ENCODE measurements at regions of chr20 and their contacts with region 1.

Region 1: GRCh38 chr20:44609511-44610312 is 27.3 kb downstream of the PKIG start:
- DNase-seq: peak; percentile 68 to 90 (median 80)
- ATAC-seq: peak; percentile 81
- H3K4me3 ChIP-seq: no peak overlapping the region
- H3K4me3 Mint-ChIP-seq: peak overlapping the region; percentile 83
- H3K27ac ChIP-seq: peak overlapping the region; percentile 35 to 86
- H3K27ac Mint-ChIP-seq: peak overlapping the region; percentile 98
- H3K4me1 ChIP-seq: peaks cover 28% of the 10 kb centered on the region
- H3K4me1 Mint-ChIP-seq: peaks cover 40% of the 10 kb centered on the region
- H3K27me3 ChIP-seq: no peaks in the 10 kb centered on the region
- H3K27me3 Mint-ChIP-seq: no peaks in the 10 kb centered on the region
- CTCF ChIP-seq: peak; percentile 93

Region 2: GRCh38 chr20:44109951-44110361 is 499.8 kb before region 1 on chr20:
- CTCF ChIA-PET with region 1: no interaction called
- POLR2A ChIA-PET with region 1: no interaction called
- intact Hi-C with region 1: loop called in 1 of 2 experiments (anchors 10 kb)
- DNase-seq: no peak
- ATAC-seq: no peak
- H3K4me3 ChIP-seq: no peak overlapping the region
- H3K4me3 Mint-ChIP-seq: no peak overlapping the region
- H3K27ac ChIP-seq: no peak overlapping the region
- H3K27ac Mint-ChIP-seq: no peak overlapping the region
- H3K4me1 ChIP-seq: no peaks in the 10 kb centered on the region
- H3K4me1 Mint-ChIP-seq: peaks cover 3% of the 10 kb centered on the region
- H3K27me3 ChIP-seq: peaks cover 18 to 19% of the 10 kb centered on the region in 2 experiments
- H3K27me3 Mint-ChIP-seq: peaks cover 71% of the 10 kb centered on the region
- CTCF ChIP-seq: no peak

Region 3: DNA sequence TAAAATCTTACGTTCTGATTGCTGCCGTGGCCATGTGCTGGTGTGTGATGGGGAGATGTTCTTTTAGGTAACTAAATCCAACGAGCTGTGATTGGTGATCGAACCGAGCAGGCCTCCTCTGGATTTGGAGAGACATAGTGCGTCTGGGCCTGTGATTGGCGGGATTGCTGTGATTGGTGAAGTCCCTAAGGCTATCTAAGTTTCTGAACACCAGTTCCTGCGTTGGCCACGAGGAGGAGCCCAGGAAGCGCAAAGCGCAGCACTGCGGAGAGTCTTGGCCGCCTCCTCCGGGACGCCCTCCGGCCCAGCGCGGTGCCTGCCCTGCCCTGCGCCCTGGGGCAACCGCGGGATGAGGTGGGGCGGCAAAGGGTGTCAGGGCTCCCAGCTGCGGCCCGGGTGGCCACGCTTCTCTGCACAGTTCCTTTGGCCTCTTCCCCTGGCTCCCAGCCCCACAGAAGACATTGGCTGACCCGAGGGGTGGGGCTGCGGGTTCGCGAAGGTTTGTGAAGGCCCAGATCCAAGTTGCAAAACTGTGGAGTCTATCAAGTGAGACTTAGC is 221.2 kb before region 1 on chr20:
- CTCF ChIA-PET with region 1: interaction called, 7 read pairs
- POLR2A ChIA-PET with region 1: no interaction called
- intact Hi-C with region 1: loop called (anchors 1 kb)
- DNase-seq: peak; percentile 39 to 85 (median 56)
- ATAC-seq: peak; percentile 92
- H3K4me3 ChIP-seq: no peak overlapping the region
- H3K4me3 Mint-ChIP-seq: no peak overlapping the region
- H3K27ac ChIP-seq: no peak overlapping the region
- H3K27ac Mint-ChIP-seq: no peak overlapping the region
- H3K4me1 ChIP-seq: peaks cover 8% of the 10 kb centered on the region
- H3K4me1 Mint-ChIP-seq: peaks cover 15% of the 10 kb centered on the region
- H3K27me3 ChIP-seq: peaks cover 4% of the 10 kb centered on the region in 2 experiments
- H3K27me3 Mint-ChIP-seq: peaks cover 8% of the 10 kb centered on the region
- CTCF ChIP-seq: peak; percentile 66

Region 4: GRCh38 chr20:44475694-44476560 is 133.8 kb before region 1 on chr20 and contains the start of gene TTPAL:
- CTCF ChIA-PET with region 1: interaction called, 3 read pairs
- POLR2A ChIA-PET with region 1: no interaction called
- intact Hi-C with region 1: loop called (anchors 1 to 5 kb)
- DNase-seq: peak; percentile 75 to 95 (median 86)
- ATAC-seq: peak; percentile 95
- H3K4me3 ChIP-seq: peak within 1 kb of the TSS; percentile 90
- H3K4me3 Mint-ChIP-seq: peak within 1 kb of the TSS; percentile 95
- H3K27ac ChIP-seq: peak within 1 kb of the TSS; percentile 89 to 98
- H3K27ac Mint-ChIP-seq: peak within 1 kb of the TSS; percentile 96
- H3K4me1 ChIP-seq: peaks cover 18% of the 10 kb centered on the region
- H3K4me1 Mint-ChIP-seq: peaks cover 26% of the 10 kb centered on the region
- H3K27me3 ChIP-seq: no peaks in the 10 kb centered on the region
- H3K27me3 Mint-ChIP-seq: no peaks in the 10 kb centered on the region
- CTCF ChIP-seq: no peak
- total RNA-seq, gene TTPAL: 9.0 to 9.9 TPM

Region 5: DNA sequence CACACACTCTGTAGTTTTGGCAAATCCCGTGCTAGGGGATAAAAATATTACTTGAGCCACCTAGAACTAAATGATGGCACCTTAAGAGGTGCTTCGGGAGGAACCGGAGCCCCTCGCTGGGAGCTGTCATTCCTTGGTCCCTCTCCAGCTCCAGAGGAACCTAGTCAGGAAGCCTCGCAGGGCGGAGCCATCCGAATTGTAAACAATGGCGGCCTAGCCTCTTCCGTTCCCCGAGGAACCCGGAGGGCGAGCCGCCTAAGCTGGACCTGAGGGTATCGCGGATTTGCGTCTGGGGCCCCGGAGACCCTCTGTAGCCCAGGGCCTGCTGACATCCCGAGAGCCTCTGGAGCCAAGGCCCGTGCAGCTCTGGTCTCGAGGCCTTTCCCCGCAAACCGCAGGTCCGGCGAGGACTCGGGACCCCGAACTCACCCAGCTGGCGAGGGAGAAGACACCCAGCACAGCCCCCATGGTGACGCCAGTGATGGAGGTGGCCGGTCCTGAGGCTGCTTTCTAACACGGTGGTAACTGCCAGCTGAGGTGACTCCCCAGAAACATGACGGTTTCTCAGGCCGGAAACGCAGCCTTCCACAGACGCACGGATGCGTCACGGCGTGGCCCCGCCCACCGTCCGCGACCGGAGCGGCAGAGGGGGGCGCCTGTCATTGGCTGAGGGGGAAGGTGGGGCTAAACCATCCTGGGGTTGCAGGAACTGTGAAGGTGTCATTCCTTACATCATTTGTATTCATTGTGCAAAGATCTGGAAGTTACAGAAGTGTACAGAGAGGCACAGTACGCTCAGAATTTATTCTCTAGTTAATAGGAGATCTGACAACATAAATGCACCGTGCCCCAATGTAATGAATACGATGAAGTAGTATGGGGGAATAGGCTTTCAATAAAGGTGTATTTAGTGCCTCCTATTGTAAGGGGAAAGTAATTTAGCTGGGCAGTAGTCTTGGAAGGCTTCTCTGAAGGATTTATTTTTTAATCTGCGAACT is 87.9 kb before region 1 on chr20 and contains the start of gene SERINC3:
- CTCF ChIA-PET with region 1: interaction called, 3 read pairs
- POLR2A ChIA-PET with region 1: interaction called, 9 read pairs
- intact Hi-C with region 1: loop called (anchors 2 to 5 kb)
- DNase-seq: peak; percentile 90 to 99 (median 97)
- ATAC-seq: peak; percentile 93
- H3K4me3 ChIP-seq: peak within 1 kb of the TSS; percentile 98
- H3K4me3 Mint-ChIP-seq: peak within 1 kb of the TSS; percentile 89
- H3K27ac ChIP-seq: peak within 1 kb of the TSS; percentile 95 to 99
- H3K27ac Mint-ChIP-seq: peak within 1 kb of the TSS; percentile 93
- H3K4me1 ChIP-seq: peaks cover 44% of the 10 kb centered on the region
- H3K4me1 Mint-ChIP-seq: peaks cover 58% of the 10 kb centered on the region
- H3K27me3 ChIP-seq: no peaks in the 10 kb centered on the region
- H3K27me3 Mint-ChIP-seq: no peaks in the 10 kb centered on the region
- CTCF ChIP-seq: peak; percentile 46
- total RNA-seq, gene SERINC3: 39.5 to 40.2 TPM

Region 6: DNA sequence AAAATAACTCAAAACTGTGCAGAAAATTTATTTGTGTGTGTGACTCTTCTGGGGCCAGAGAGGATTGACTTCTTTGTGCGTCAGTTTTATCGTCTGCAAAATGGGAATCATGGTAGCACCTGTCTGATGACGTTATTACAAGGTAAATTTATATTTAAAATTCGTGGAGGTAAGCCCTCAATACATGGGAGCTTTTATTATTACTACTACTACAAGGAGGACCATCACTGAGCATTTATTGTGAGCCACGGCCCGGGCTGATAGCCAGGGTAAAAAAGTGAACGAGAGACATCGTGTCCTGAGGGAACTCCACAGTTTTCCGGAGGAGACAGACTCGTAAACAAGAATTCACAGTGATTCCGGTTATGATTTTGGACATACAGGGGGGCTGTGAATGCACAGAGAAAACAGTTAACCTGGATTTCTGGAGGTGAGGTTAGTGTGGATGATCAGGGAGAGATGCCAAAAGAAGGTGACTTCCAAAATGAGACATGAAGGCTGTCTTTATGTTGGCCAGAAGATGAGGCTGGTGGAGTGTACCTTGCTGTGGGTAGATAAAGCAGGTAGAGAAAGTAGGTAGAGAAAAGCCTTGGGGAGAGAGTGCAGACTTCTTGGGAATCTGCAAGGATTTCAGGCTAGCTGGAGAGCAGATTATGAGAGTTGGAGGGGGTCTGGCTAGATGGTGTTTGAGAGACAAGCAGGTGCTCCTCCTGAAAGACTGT is 77.3 kb before region 1 on chr20:
- CTCF ChIA-PET with region 1: interaction called, 3 read pairs
- POLR2A ChIA-PET with region 1: no interaction called
- intact Hi-C with region 1: loop called (anchors 2 to 5 kb)
- DNase-seq: no peak
- ATAC-seq: peak; percentile 23
- H3K4me3 ChIP-seq: peak overlapping the region; percentile 70
- H3K4me3 Mint-ChIP-seq: no peak overlapping the region
- H3K27ac ChIP-seq: peak overlapping the region in 1 of 2 donors; percentile 17
- H3K27ac Mint-ChIP-seq: no peak overlapping the region
- H3K4me1 ChIP-seq: peaks cover 21% of the 10 kb centered on the region
- H3K4me1 Mint-ChIP-seq: no peaks in the 10 kb centered on the region
- H3K27me3 ChIP-seq: no peaks in the 10 kb centered on the region
- H3K27me3 Mint-ChIP-seq: no peaks in the 10 kb centered on the region
- CTCF ChIP-seq: no peak

Region 7: GRCh38 chr20:44651684-44652423 is 42.1 kb after region 1 on chr20 and contains the start of gene ADA:
- CTCF ChIA-PET with region 1: interaction called, 5 read pairs
- POLR2A ChIA-PET with region 1: interaction called, 26 read pairs
- intact Hi-C with region 1: loop called in 1 of 2 experiments (anchors 5 kb)
- DNase-seq: peak in 12 of 14 experiments; percentile 20 to 70 (median 41)
- ATAC-seq: peak; percentile 56
- H3K4me3 ChIP-seq: peak within 1 kb of the TSS; percentile 93
- H3K4me3 Mint-ChIP-seq: peak within 1 kb of the TSS; percentile 90
- H3K27ac ChIP-seq: peak within 1 kb of the TSS; percentile 66 to 69
- H3K27ac Mint-ChIP-seq: peak within 1 kb of the TSS; percentile 91
- H3K4me1 ChIP-seq: peaks cover 55% of the 10 kb centered on the region
- H3K4me1 Mint-ChIP-seq: peaks cover 47% of the 10 kb centered on the region
- H3K27me3 ChIP-seq: no peaks in the 10 kb centered on the region
- H3K27me3 Mint-ChIP-seq: no peaks in the 10 kb centered on the region
- CTCF ChIP-seq: no peak
- total RNA-seq, gene ADA: 31.7 to 32.8 TPM

Region 8: GRCh38 chr20:44733341-44734069 is 123.8 kb after region 1 on chr20:
- CTCF ChIA-PET with region 1: no interaction called
- POLR2A ChIA-PET with region 1: no interaction called
- intact Hi-C with region 1: no loop called
- DNase-seq: peak; percentile 38 to 81 (median 50)
- ATAC-seq: peak; percentile 74
- H3K4me3 ChIP-seq: no peak overlapping the region
- H3K4me3 Mint-ChIP-seq: no peak overlapping the region
- H3K27ac ChIP-seq: no peak overlapping the region
- H3K27ac Mint-ChIP-seq: no peak overlapping the region
- H3K4me1 ChIP-seq: peaks cover 14% of the 10 kb centered on the region
- H3K4me1 Mint-ChIP-seq: peaks cover 11% of the 10 kb centered on the region
- H3K27me3 ChIP-seq: no peaks in the 10 kb centered on the region
- H3K27me3 Mint-ChIP-seq: no peaks in the 10 kb centered on the region
- CTCF ChIP-seq: peak; percentile 65

Region 9: GRCh38 chr20:44747166-44748004 is 137.7 kb after region 1 on chr20:
- CTCF ChIA-PET with region 1: no interaction called
- POLR2A ChIA-PET with region 1: no interaction called
- intact Hi-C with region 1: no loop called
- DNase-seq: peak; percentile 22 to 74 (median 46)
- ATAC-seq: peak; percentile 60
- H3K4me3 ChIP-seq: no peak overlapping the region
- H3K4me3 Mint-ChIP-seq: peak overlapping the region; percentile 72
- H3K27ac ChIP-seq: no peak overlapping the region
- H3K27ac Mint-ChIP-seq: no peak overlapping the region
- H3K4me1 ChIP-seq: peaks cover 10% of the 10 kb centered on the region
- H3K4me1 Mint-ChIP-seq: peaks cover 20% of the 10 kb centered on the region
- H3K27me3 ChIP-seq: peaks cover 17 to 30% of the 10 kb centered on the region in 2 experiments
- H3K27me3 Mint-ChIP-seq: peaks cover 37% of the 10 kb centered on the region
- CTCF ChIP-seq: peak; percentile 55

Measured in CD4-positive, alpha-beta T cell (primary cell).